Dendritic cell treated with granulocyte-macrophage colony-stimulating factor and Interleukin-4, amounts not matched to agents 40 ng/mL and 50 ng/mL, for 4 days (primary cell): ENCODE measurements at regions of chr15 and their contacts with region 1.

Region 1: GRCh38 chr15:99282121-99282520 is 30.8 kb downstream of the LRRC28 start:
- H3K4me3 Mint-ChIP-seq: no peak overlapping the region
- H3K27ac Mint-ChIP-seq: no peak overlapping the region
- H3K4me1 Mint-ChIP-seq: peaks cover 5% of the 10 kb centered on the region
- H3K27me3 Mint-ChIP-seq: no peaks in the 10 kb centered on the region

Region 2: DNA sequence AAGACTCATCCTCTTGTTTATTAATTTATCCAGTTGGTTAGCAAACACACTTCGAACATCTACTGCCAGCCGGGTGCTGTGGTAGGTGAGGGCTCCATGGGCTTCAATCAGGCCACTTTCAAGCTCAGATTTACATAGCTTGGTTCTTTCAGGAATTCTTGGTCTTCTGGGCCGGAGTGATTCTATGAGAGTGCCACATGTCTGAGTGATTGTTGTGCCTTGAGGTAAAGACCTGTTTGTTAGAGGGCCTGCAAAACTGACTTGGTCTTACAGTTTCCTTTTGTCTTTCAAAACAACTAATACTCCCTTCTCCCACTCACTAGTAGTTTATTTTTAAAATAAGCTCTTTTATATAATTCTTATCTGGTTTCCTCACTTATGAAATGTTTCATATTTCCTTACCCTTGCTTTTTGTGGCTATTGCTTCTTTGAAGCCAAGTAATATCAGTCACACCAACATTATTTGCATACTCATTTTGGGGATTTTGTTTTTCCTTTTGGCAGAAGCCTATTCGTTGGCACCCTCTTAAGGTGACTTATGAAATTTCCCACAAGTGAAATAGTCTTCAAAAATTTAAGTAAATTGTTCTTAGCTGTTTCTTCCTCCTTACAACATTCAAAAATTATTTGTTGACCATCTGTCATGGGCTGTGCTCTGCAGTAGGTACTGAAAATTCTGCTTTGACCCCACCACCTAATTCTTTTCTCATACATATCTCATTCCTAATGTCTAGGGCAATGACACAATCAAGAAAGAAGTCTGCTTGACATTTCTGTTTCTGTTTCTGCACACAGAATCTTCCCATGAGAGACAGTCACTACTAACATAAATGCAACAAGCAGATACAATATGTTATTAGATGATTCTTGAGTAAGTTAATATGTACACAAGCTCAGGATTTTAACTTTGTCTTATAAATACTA is 89.3 kb after region 1 on chr15:
- intact Hi-C with region 1: loop called (anchors 10 kb)
- H3K4me3 Mint-ChIP-seq: no peak overlapping the region
- H3K27ac Mint-ChIP-seq: no peak overlapping the region
- H3K4me1 Mint-ChIP-seq: peaks cover 12% of the 10 kb centered on the region
- H3K27me3 Mint-ChIP-seq: no peaks in the 10 kb centered on the region